OCI-LY7 (cell line): ENCODE measurements at regions of chr11 and their contacts with region 1.

Region 1: GRCh38 chr11:61871158-61871597 is 20.2 kb downstream of the FADS3 start:
- DNase-seq: peak; percentile 81
- H3K4me3 ChIP-seq: no peak overlapping the region
- H3K27ac ChIP-seq: no peak overlapping the region
- H3K4me1 ChIP-seq: peaks cover 9% of the 10 kb centered on the region
- CTCF ChIP-seq: peak; percentile 95

Region 2: DNA sequence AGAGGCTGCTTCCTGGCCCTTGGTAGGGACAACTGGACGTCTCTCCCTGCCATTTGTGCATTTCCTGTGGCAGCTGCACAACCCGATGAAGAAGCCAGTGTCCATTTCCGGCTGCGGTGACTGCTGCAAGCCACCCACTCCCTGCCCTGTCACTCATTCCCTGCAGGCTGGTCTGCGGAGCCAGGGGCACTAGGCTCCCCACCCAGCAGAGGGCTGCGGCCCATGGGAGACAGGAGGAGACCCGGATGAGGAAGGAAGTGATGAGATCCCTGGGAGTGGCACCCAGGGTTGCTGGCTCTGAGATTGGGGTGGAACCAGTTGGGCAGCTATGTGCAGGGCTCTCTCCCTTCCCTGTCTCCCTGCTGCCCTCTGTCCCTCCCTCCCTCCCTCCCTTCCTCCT is 128.8 kb before region 1 on chr11:
- CTCF ChIA-PET with region 1: no interaction called
- POLR2A ChIA-PET with region 1: no interaction called
- intact Hi-C with region 1: no loop called
- DNase-seq: no peak
- H3K4me3 ChIP-seq: no peak overlapping the region
- H3K27ac ChIP-seq: no peak overlapping the region
- H3K4me1 ChIP-seq: no peaks in the 10 kb centered on the region
- CTCF ChIP-seq: no peak

Region 3: DNA sequence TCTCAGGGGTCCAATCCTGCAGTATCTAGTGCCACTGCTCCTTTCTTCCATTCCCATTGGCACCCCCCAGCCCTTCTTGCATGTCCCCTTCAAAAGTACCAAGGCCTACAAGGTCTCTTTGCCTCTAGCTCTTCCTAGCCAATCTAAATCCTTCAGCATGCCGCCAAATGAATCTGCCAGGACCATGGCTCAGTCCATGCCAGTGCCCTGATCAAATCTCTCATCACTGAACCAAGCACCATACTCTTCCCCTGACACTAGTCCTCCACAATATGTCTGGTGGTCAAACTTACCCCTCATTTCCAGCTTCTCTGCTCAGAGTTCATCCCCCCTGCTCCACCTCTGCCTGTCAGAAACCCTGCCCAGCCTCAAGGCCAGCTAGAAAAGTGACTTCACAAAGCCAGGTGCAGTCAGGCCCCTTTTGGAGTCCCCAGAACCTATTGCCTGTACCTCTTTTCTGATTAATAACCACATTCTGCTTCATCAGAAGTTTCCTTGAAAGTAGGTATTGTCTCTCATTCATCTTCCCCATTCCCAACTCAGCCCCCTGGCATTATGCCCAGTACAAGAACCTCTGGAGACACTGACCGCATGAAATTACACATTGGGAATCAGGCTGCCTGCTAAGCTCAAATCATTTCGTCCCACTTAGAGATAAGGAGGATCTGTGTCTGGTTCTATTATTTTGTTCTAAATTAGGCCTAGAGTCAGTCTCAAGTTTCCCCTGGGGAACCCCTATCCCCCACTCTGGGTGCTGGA is 67.1 kb before region 1 on chr11:
- CTCF ChIA-PET with region 1: no interaction called
- POLR2A ChIA-PET with region 1: no interaction called
- intact Hi-C with region 1: no loop called
- DNase-seq: no peak
- H3K4me3 ChIP-seq: no peak overlapping the region
- H3K27ac ChIP-seq: no peak overlapping the region
- H3K4me1 ChIP-seq: no peaks in the 10 kb centered on the region
- CTCF ChIP-seq: no peak

Region 4: GRCh38 chr11:61891331-61892084 is 20.3 kb after region 1 on chr11 and contains the start of gene FADS3:
- CTCF ChIA-PET with region 1: no interaction called
- POLR2A ChIA-PET with region 1: interaction called, 7 read pairs
- intact Hi-C with region 1: loop called (anchors 1 kb)
- DNase-seq: peak; percentile 88
- H3K4me3 ChIP-seq: peak within 1 kb of the TSS; percentile 93
- H3K27ac ChIP-seq: peak within 1 kb of the TSS; percentile 77
- H3K4me1 ChIP-seq: peaks cover 30% of the 10 kb centered on the region
- CTCF ChIP-seq: peak; percentile 42; the same call in 1 of the 2 replicates
- total RNA-seq, gene FADS3: 168 and 191 TPM in 2 replicates

Region 5: GRCh38 chr11:61947486-61948210 is 76.5 kb after region 1 on chr11:
- CTCF ChIA-PET with region 1: no interaction called
- POLR2A ChIA-PET with region 1: no interaction called
- intact Hi-C with region 1: loop called (anchors 1 kb)
- DNase-seq: peak; percentile 78
- H3K4me3 ChIP-seq: no peak overlapping the region
- H3K27ac ChIP-seq: no peak overlapping the region
- H3K4me1 ChIP-seq: peaks cover 8% of the 10 kb centered on the region
- CTCF ChIP-seq: peak; percentile 94

Region 6: GRCh38 chr11:62081378-62082291 is 210.5 kb after region 1 on chr11:
- CTCF ChIA-PET with region 1: interaction called, 7 read pairs
- POLR2A ChIA-PET with region 1: no interaction called
- intact Hi-C with region 1: loop called (anchors 1 kb)
- DNase-seq: peak; percentile 58
- H3K4me3 ChIP-seq: no peak overlapping the region
- H3K27ac ChIP-seq: no peak overlapping the region
- H3K4me1 ChIP-seq: no peaks in the 10 kb centered on the region
- CTCF ChIP-seq: peak; percentile 99